Activated CD4-positive, alpha-beta T cell treated with anti-CD3 and anti-CD28 coated beads for 36 hours (primary cell): ENCODE measurements at regions of chr9 and their contacts with region 1.

Region 1: GRCh38 chr9:124126571-124127289 is 115.2 kb downstream of the LHX2 start:
- DNase-seq: peak; percentile 88
- ATAC-seq: peak; percentile 65
- H3K4me3 Mint-ChIP-seq: no peak overlapping the region
- H3K27ac Mint-ChIP-seq: no peak overlapping the region
- H3K4me1 Mint-ChIP-seq: no peaks in the 10 kb centered on the region
- H3K27me3 Mint-ChIP-seq: peaks cover 5% of the 10 kb centered on the region

Region 2: DNA sequence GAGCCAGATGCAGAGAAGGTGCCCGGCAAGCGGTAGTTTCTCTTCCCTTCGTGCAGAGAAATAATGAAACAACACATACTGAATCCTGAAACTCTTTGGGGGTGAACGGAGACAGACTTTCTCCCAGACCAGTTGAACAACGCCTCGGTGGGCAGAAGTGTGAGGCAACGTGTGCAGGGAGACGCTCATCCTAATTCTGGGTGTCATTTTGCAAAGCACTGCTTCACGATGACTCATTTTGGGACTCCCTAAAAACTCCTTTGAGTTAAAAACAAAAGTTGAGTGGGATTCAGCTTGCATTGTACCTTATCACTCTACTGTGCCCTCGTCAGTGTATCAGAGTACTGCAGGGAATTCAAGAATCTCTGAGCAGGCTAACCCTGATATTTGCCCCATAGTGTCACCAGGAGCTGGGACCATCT is 127.5 kb after region 1 on chr9:
- CTCF ChIA-PET with region 1: no interaction called
- POLR2A ChIA-PET with region 1: no interaction called
- intact Hi-C with region 1: loop called (anchors 1 to 2 kb)
- DNase-seq: peak; percentile 80
- ATAC-seq: peak; percentile 91
- H3K4me3 Mint-ChIP-seq: no peak overlapping the region
- H3K27ac Mint-ChIP-seq: no peak overlapping the region
- H3K4me1 Mint-ChIP-seq: peaks cover 34% of the 10 kb centered on the region
- H3K27me3 Mint-ChIP-seq: peaks cover 38% of the 10 kb centered on the region

Region 3: GRCh38 chr9:124320062-124320973 is 193.6 kb after region 1 on chr9:
- CTCF ChIA-PET with region 1: interaction called, 11 read pairs
- POLR2A ChIA-PET with region 1: no interaction called
- intact Hi-C with region 1: loop called (anchors 1 to 2 kb)
- DNase-seq: peak; percentile 72
- ATAC-seq: peak; percentile 78
- H3K4me3 Mint-ChIP-seq: no peak overlapping the region
- H3K27ac Mint-ChIP-seq: no peak overlapping the region
- H3K4me1 Mint-ChIP-seq: no peaks in the 10 kb centered on the region
- H3K27me3 Mint-ChIP-seq: no peaks in the 10 kb centered on the region

Region 4: DNA sequence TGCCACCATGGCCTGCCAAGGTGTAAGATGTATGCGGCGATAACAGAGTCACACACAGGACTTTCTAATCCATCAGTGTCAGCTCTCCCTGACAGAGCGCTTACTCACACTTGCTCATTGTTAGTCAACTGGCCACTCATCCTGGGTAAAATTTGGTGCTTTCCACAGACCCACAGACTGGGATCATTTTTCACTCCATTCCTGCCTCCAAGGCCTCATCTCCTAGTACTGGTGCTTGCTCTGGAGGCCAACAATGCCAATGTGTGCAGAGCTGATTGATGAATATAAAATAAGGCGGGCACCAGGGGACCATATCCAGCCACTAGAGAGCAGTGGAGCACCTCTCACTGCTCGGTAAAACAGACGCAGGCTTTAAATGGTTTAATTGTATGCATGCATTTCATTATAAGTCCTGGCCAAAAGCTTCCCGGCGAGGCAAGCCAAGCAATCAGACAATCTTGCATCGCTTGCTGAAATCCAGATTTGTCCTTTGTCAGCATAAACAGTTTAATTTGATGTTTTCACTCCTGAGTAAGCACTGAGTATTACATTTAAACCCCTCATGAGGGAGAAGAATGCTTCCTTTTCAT is 266.2 kb after region 1 on chr9:
- CTCF ChIA-PET with region 1: interaction called, 6 read pairs
- POLR2A ChIA-PET with region 1: no interaction called
- intact Hi-C with region 1: loop called (anchors 2 to 5 kb)
- DNase-seq: peak; percentile 30
- ATAC-seq: peak; percentile 60
- H3K4me3 Mint-ChIP-seq: no peak overlapping the region
- H3K27ac Mint-ChIP-seq: no peak overlapping the region
- H3K4me1 Mint-ChIP-seq: peaks cover 60% of the 10 kb centered on the region
- H3K27me3 Mint-ChIP-seq: no peaks in the 10 kb centered on the region